B cell (primary cell): ENCODE measurements at regions of chr3 and their contacts with region 1.

Region 1: GRCh38 chr3:149120051-149120972 is 9.1 kb upstream of the HPS3 start:
- DNase-seq: peak; percentile 80
- ATAC-seq: peak; percentile 96
- H3K4me3 ChIP-seq: no peak overlapping the region
- H3K4me3 Mint-ChIP-seq: no peak overlapping the region
- H3K27ac ChIP-seq: no peak overlapping the region
- H3K27ac Mint-ChIP-seq: no peak overlapping the region
- H3K4me1 ChIP-seq: peaks cover 0 to 5% of the 10 kb centered on the region in 2 donors
- H3K4me1 Mint-ChIP-seq: peaks cover 4% of the 10 kb centered on the region
- H3K27me3 ChIP-seq: no peaks in the 10 kb centered on the region
- H3K27me3 Mint-ChIP-seq: no peaks in the 10 kb centered on the region
- CTCF ChIP-seq: peak; percentile 83

Region 2: GRCh38 chr3:148955544-148956346 is 164.6 kb before region 1 on chr3:
- CTCF ChIA-PET with region 1: interaction called, 16 read pairs
- POLR2A ChIA-PET with region 1: no interaction called
- intact Hi-C with region 1: loop called (anchors 2 kb)
- DNase-seq: peak; percentile 40
- ATAC-seq: no peak
- H3K4me3 ChIP-seq: no peak overlapping the region
- H3K4me3 Mint-ChIP-seq: no peak overlapping the region
- H3K27ac ChIP-seq: no peak overlapping the region
- H3K27ac Mint-ChIP-seq: no peak overlapping the region
- H3K4me1 ChIP-seq: no peaks in the 10 kb centered on the region
- H3K4me1 Mint-ChIP-seq: no peaks in the 10 kb centered on the region
- H3K27me3 ChIP-seq: no peaks in the 10 kb centered on the region
- H3K27me3 Mint-ChIP-seq: peaks cover 8% of the 10 kb centered on the region
- CTCF ChIP-seq: peak; percentile 50

Region 3: GRCh38 chr3:149145974-149146373 is 25.7 kb after region 1 on chr3:
- CTCF ChIA-PET with region 1: interaction called, 20 read pairs
- POLR2A ChIA-PET with region 1: no interaction called
- intact Hi-C with region 1: no loop called
- DNase-seq: peak; percentile 88
- ATAC-seq: peak; percentile 93
- H3K4me3 ChIP-seq: peak overlapping the region in 4 of 5 experiments; percentile 6 to 42 (median 34)
- H3K4me3 Mint-ChIP-seq: no peak overlapping the region
- H3K27ac ChIP-seq: peak overlapping the region; percentile 84
- H3K27ac Mint-ChIP-seq: no peak overlapping the region
- H3K4me1 ChIP-seq: peaks cover 54 to 65% of the 10 kb centered on the region in 2 donors
- H3K4me1 Mint-ChIP-seq: peaks cover 45% of the 10 kb centered on the region
- H3K27me3 ChIP-seq: no peaks in the 10 kb centered on the region
- H3K27me3 Mint-ChIP-seq: no peaks in the 10 kb centered on the region
- CTCF ChIP-seq: no peak

Region 4: GRCh38 chr3:149152420-149152819 is 32.1 kb after region 1 on chr3:
- CTCF ChIA-PET with region 1: interaction called, 15 read pairs
- POLR2A ChIA-PET with region 1: no interaction called
- intact Hi-C with region 1: no loop called
- DNase-seq: no peak
- ATAC-seq: no peak
- H3K4me3 ChIP-seq: no peak overlapping the region
- H3K4me3 Mint-ChIP-seq: no peak overlapping the region
- H3K27ac ChIP-seq: peak overlapping the region in 1 of 2 donors; percentile 37
- H3K27ac Mint-ChIP-seq: peak overlapping the region; percentile 21
- H3K4me1 ChIP-seq: peaks cover 20 to 24% of the 10 kb centered on the region in 2 donors
- H3K4me1 Mint-ChIP-seq: peaks cover 34% of the 10 kb centered on the region
- H3K27me3 ChIP-seq: no peaks in the 10 kb centered on the region
- H3K27me3 Mint-ChIP-seq: no peaks in the 10 kb centered on the region
- CTCF ChIP-seq: no peak

Region 5: DNA sequence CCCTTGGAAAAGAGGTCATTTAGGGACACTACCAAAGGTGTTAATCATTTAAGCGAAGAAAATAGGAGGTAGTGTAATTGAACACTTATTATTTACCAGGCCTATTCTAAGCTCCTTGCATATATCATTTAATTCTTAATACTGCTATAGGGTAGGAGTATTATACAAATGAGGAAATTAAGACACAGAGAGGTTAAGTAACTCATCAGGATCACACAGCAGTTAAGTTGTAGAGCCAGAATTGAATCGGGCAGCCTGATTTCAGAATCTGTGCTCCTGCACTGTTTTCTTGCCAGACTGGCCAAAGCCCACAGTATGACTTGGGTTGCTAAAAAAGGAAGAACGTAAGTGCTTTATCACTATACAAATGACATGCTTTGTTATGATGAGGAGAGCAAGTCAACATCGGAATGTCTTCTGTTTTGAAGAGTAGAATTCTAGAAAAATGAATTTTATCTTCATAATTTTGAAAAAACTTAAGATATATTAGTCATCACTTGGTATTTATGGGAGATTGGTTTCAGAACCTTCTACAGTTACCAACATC is 40.5 kb after region 1 on chr3:
- CTCF ChIA-PET with region 1: interaction called, 14 read pairs
- POLR2A ChIA-PET with region 1: no interaction called
- intact Hi-C with region 1: no loop called
- DNase-seq: no peak
- ATAC-seq: no peak
- H3K4me3 ChIP-seq: no peak overlapping the region
- H3K4me3 Mint-ChIP-seq: no peak overlapping the region
- H3K27ac ChIP-seq: no peak overlapping the region
- H3K27ac Mint-ChIP-seq: no peak overlapping the region
- H3K4me1 ChIP-seq: peaks cover 4 to 5% of the 10 kb centered on the region in 2 donors
- H3K4me1 Mint-ChIP-seq: peaks cover 9% of the 10 kb centered on the region
- H3K27me3 ChIP-seq: no peaks in the 10 kb centered on the region
- H3K27me3 Mint-ChIP-seq: no peaks in the 10 kb centered on the region
- CTCF ChIP-seq: no peak

Region 6: GRCh38 chr3:149258298-149258697 is 138.0 kb after region 1 on chr3:
- CTCF ChIA-PET with region 1: interaction called, 17 read pairs
- POLR2A ChIA-PET with region 1: no interaction called
- intact Hi-C with region 1: no loop called
- DNase-seq: no peak
- ATAC-seq: no peak
- H3K4me3 ChIP-seq: no peak overlapping the region
- H3K4me3 Mint-ChIP-seq: no peak overlapping the region
- H3K27ac ChIP-seq: no peak overlapping the region
- H3K27ac Mint-ChIP-seq: no peak overlapping the region
- H3K4me1 ChIP-seq: no peaks in the 10 kb centered on the region
- H3K4me1 Mint-ChIP-seq: peaks cover 7% of the 10 kb centered on the region
- H3K27me3 ChIP-seq: no peaks in the 10 kb centered on the region
- H3K27me3 Mint-ChIP-seq: no peaks in the 10 kb centered on the region
- CTCF ChIP-seq: no peak

Region 7: DNA sequence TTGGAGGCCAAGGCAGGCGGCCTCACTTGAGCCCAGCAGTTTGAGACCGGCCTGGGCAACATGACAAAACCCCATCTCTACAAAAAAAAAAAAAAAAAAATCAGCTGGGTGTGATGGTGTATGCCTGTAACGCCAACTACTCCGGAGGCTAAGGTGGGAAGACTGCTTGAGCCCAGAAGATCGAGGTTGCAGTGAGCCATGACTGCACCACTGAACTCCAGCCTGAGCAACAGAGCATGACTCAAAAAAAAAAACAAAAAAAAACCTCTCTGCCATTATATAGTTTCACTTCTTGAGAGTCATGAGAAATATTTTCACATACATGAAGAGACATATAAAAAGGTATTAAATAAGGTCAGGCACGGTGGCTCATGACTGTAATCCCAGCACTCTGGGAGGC is 147.3 kb after region 1 on chr3:
- CTCF ChIA-PET with region 1: interaction called, 299 read pairs
- POLR2A ChIA-PET with region 1: no interaction called
- intact Hi-C with region 1: no loop called
- DNase-seq: peak; percentile 45
- ATAC-seq: peak; percentile 72
- H3K4me3 ChIP-seq: no peak overlapping the region
- H3K4me3 Mint-ChIP-seq: peak overlapping the region; percentile 40
- H3K27ac ChIP-seq: no peak overlapping the region
- H3K27ac Mint-ChIP-seq: no peak overlapping the region
- H3K4me1 ChIP-seq: peaks cover 14 to 17% of the 10 kb centered on the region in 2 donors
- H3K4me1 Mint-ChIP-seq: peaks cover 29% of the 10 kb centered on the region
- H3K27me3 ChIP-seq: no peaks in the 10 kb centered on the region
- H3K27me3 Mint-ChIP-seq: no peaks in the 10 kb centered on the region
- CTCF ChIP-seq: no peak